ENCODE measurements at regions of chr9 and their contacts with region 1.

Region 1: GRCh38 chr9:128117613-128118471 is 9.7 kb downstream of the PTGES2 start:
- DNase-seq: peak; percentile 97
- H3K4me3 Mint-ChIP-seq: no peak overlapping the region
- H3K27ac Mint-ChIP-seq: peak overlapping the region; percentile 52
- H3K4me1 Mint-ChIP-seq: peaks cover 11% of the 10 kb centered on the region
- H3K27me3 Mint-ChIP-seq: no peaks in the 10 kb centered on the region

Region 2: GRCh38 chr9:128072144-128073021 is 45.5 kb before region 1 on chr9:
- CTCF ChIA-PET with region 1: interaction called, 13 read pairs
- POLR2A ChIA-PET with region 1: no interaction called
- DNase-seq: peak; percentile 43
- H3K4me3 Mint-ChIP-seq: peak overlapping the region; percentile 73
- H3K27ac Mint-ChIP-seq: peak overlapping the region; percentile 89
- H3K4me1 Mint-ChIP-seq: peaks cover 52% of the 10 kb centered on the region
- H3K27me3 Mint-ChIP-seq: no peaks in the 10 kb centered on the region

Region 3: DNA sequence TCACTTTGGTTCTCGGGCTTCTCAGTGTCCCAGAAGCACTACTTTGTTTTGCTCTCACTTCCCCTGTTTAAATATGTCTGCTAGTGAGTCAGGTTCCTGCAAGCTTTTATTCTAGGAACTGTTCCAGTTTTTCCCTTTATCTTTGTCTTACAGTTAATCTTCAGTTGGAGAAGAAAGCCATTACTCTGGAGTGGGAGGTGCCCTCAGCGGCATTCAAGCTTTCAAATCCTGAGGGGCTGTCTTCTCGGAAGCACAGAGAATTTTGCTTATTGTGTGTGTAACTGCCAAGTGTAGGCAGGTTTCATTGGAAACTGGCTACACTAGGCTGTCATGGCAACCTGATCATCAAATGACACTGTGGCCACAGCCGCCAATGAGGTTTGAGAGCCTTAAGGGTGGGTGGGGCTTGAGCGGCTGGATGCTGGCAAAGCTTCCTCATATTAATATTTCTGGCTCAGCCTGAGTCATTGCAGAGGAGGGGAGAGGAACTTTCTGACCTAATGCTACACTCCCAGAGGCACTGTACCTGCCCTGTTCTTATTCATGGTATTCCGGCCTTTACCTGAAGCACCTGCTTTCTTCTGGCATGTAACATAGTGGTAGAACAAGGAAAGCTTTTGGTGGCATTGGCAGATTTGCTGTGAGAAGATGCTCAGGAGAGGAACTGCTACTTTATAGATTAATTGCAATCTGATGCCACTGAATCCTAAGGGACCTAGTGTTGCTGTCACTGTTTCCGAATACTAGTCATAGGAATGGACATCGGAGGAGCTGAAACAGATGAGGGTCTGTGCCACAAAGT is 23.5 kb before region 1 on chr9:
- CTCF ChIA-PET with region 1: interaction called, 33 read pairs
- POLR2A ChIA-PET with region 1: no interaction called
- DNase-seq: peak; percentile 81
- H3K4me3 Mint-ChIP-seq: peak overlapping the region; percentile 25
- H3K27ac Mint-ChIP-seq: peak overlapping the region; percentile 81
- H3K4me1 Mint-ChIP-seq: peaks cover 64% of the 10 kb centered on the region
- H3K27me3 Mint-ChIP-seq: no peaks in the 10 kb centered on the region

Region 4: GRCh38 chr9:128103589-128103962 is 14.3 kb before region 1 on chr9:
- CTCF ChIA-PET with region 1: interaction called, 54 read pairs
- POLR2A ChIA-PET with region 1: no interaction called
- DNase-seq: peak; percentile 53
- H3K4me3 Mint-ChIP-seq: no peak overlapping the region
- H3K27ac Mint-ChIP-seq: peak overlapping the region; percentile 83
- H3K4me1 Mint-ChIP-seq: peaks cover 47% of the 10 kb centered on the region
- H3K27me3 Mint-ChIP-seq: no peaks in the 10 kb centered on the region

Region 5: GRCh38 chr9:128127990-128128835 is 10.4 kb after region 1 on chr9:
- CTCF ChIA-PET with region 1: interaction called, 39 read pairs
- POLR2A ChIA-PET with region 1: no interaction called
- DNase-seq: peak; percentile 87
- H3K4me3 Mint-ChIP-seq: peak overlapping the region; percentile 97
- H3K27ac Mint-ChIP-seq: peak overlapping the region; percentile 99
- H3K4me1 Mint-ChIP-seq: peaks cover 39% of the 10 kb centered on the region
- H3K27me3 Mint-ChIP-seq: peaks cover 18% of the 10 kb centered on the region

Measured in activated CD4-positive, alpha-beta T cell treated with anti-CD3 and anti-CD28 coated beads, Interleukin-2, amount 10 ng/mL, durations not matched to agents 7 days and 5 days (primary cell).